Tibial artery (tissue), 4 donors: ENCODE measurements at regions of chr1 and their contacts with region 1.

Region 1: DNA sequence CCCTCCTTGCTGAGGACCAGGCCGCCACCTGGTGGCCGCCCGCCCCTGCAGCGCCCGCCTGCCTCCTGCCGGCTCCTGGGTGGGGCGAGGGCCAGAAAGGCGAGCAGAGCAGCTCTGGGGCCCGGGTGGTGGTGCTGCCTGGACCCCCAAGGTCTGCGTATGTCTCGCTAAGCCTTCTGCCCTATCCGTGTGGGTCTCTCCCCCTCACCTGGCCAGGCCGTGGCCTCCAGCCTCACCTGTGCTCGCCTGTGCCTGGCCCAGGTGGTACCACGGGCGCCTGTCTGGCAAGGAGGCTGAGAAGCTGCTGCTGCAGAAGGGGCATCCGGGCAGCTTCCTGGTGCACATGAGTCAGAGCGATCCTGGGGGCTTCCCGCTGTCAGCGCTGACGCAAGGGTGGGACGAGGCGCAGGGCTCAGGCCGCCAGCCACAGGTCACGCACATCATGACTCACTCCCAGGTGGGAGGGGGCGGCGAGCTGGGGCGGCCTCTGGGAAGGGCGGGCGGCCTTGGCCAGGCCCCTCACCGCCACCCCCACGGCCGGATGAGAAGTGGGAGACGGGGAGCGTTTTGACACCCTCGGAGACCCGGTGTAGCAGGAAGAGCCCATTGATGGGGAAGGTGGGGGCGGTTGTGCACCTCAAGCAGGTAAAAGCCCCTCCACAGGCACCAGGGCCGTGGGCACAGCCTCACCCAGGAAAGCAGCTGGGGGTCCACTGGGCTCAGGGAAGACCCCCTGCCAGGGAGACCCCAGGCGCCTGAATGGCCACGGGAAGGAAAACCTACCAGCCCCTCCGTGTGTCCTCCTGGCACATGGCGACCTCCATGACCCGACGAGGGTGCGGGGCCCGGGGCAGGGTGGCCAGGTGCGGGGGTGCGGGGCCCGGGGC is 9.9 kb downstream of the RNF223 start:
- DNase-seq: no peak
- H3K4me3 ChIP-seq: no peak overlapping the region
- H3K27ac ChIP-seq: no peak overlapping the region
- H3K4me1 ChIP-seq: peaks cover 0 to 46% (median 27%) of the 10 kb centered on the region in 4 donors
- H3K27me3 ChIP-seq: peaks cover 3 to 90% of the 10 kb centered on the region in 2 donors
- CTCF ChIP-seq: peak; percentile 79 to 83

Region 2: GRCh38 chr1:983799-984473 is 80.3 kb before region 1 on chr1:
- intact Hi-C with region 1: loop called (anchors 2 kb)
- DNase-seq: no peak
- H3K4me3 ChIP-seq: no peak overlapping the region
- H3K27ac ChIP-seq: no peak overlapping the region
- H3K4me1 ChIP-seq: peaks cover 0 to 27% (median 19%) of the 10 kb centered on the region in 4 donors
- H3K27me3 ChIP-seq: peaks cover 0 to 2% of the 10 kb centered on the region in 2 donors
- CTCF ChIP-seq: peak; percentile 55 to 98

Region 3: DNA sequence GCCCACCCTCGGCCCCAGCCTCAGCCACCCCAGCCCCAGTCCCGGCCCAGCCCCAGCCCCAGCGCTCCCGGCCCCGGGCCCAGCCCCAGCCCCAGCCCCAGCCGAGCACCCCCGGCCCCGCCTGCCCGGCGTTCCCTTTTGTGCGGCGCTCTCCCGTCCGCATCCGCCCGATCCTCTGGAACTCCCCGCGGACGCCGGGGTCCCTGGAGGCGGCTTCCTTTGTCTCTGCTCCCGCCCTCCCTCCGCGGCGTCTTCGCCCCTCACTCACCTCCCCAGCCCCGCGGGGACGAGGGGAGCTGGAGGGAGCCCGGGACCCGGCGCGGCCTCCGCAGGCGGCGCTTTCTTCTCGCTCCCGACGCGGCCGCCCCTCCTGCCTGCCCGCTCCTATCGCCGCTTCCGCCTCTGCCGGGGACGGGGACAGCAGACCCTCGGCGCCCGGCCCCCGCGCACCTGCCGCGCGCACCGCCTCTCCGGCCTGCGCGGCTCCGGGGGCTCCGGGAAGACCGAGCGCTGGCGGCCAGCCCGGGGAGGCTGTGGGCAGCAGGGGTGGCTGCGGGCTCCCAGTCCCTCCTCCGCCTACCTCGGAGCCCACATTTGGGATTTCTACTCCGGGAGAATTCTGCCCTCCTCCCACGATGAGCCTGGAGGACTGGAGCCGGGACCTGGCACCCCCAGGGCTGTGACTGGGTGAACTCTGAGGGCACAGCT is 30.3 kb before region 1 on chr1:
- intact Hi-C with region 1: loop called (anchors 2 kb)
- DNase-seq: no peak
- H3K4me3 ChIP-seq: peak overlapping the region; percentile 40 to 58
- H3K27ac ChIP-seq: no peak overlapping the region
- H3K4me1 ChIP-seq: peaks cover 0 to 23% (median 19%) of the 10 kb centered on the region in 4 donors
- H3K27me3 ChIP-seq: peaks cover 3 to 70% of the 10 kb centered on the region in 2 donors
- CTCF ChIP-seq: no peak

Region 4: DNA sequence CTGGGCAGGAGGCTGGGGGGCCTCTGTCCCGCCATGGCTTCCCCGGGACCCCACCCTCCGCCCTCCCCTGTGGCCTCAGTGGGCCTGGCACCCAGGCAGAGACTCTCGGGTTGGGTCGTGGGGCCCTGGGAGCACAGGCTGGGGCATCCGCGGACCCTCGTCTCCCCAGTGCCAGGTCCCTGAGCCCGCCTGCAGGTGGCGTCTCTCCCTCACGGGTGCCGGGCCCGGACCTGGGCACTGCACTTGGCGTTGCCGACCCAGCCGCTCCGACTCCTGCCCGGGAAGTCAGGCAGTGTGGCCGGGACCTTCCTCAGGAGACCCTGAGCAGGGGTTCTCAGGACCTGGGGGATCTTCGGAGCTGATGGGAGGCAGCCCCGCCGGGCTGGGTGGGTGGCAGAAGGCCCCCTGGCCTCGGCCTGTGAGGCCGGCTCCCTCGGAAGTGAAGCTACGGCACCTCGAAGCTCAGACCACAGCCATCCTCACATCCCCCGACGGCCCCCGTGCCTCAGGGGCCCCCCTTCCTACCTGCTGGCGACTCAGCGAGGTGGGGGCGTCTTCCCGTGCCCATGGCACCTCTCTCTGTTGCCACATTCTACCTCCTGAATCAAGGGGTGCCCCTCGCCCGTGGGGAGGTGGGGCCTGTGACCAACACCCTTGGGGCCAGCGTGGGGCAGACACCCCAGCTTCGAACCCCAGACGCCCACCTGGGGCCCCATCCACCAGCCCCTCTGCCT is 58.1 kb after region 1 on chr1:
- intact Hi-C with region 1: no loop called
- DNase-seq: peak; percentile 66 to 84
- H3K4me3 ChIP-seq: peak overlapping the region in 1 of 2 donors; percentile 19
- H3K27ac ChIP-seq: no peak overlapping the region
- H3K4me1 ChIP-seq: peaks cover 0 to 14% (median 4%) of the 10 kb centered on the region in 4 donors
- H3K27me3 ChIP-seq: peaks cover 0 to 44% of the 10 kb centered on the region in 2 donors
- CTCF ChIP-seq: peak; percentile 78 to 87